ENCODE measurements at regions of chr7 and their contacts with region 1.

Region 1: GRCh38 chr7:73451780-73452398 is 18.3 kb downstream of the FZD9 start:
- DNase-seq: peak in 11 of 35 experiments; percentile 11 to 80 (median 26)
- ATAC-seq: peak; percentile 69 to 85 (median 80)
- H3K4me3 ChIP-seq: no peak overlapping the region
- H3K4me3 Mint-ChIP-seq: no peak overlapping the region
- H3K27ac ChIP-seq: no peak overlapping the region
- H3K27ac Mint-ChIP-seq: no peak overlapping the region
- H3K4me1 ChIP-seq: no peaks in the 10 kb centered on the region
- H3K4me1 Mint-ChIP-seq: peaks cover 12 to 14% (median 13%) of the 10 kb centered on the region in 3 donors
- H3K27me3 ChIP-seq: no peaks in the 10 kb centered on the region
- H3K27me3 Mint-ChIP-seq: no peaks in the 10 kb centered on the region

Region 2: DNA sequence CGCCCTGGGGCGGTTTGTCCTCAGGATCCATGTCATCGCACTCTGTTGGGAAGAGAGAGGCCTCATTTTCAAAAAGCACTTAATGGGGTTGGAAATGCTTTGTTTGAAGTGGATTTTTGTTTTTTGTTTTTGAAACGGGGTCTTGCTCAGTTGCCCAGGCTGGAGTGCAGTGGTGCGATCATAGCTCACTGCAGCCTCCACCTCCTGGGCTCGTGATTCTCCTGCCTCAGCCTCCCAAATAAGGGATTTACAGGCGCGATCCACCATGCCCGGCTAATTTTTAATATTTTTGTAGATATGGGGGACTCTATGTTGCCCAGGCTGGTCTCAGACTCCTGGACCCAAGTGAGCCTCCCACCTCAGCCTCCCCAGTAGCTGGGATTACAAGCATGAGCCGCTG is 123.2 kb before region 1 on chr7:
- CTCF ChIA-PET with region 1: interaction called in 1 of 2 experiments, 11 read pairs
- POLR2A ChIA-PET with region 1: no interaction called
- DNase-seq: no peak
- ATAC-seq: no peak
- H3K4me3 ChIP-seq: no peak overlapping the region
- H3K4me3 Mint-ChIP-seq: no peak overlapping the region
- H3K27ac ChIP-seq: no peak overlapping the region
- H3K27ac Mint-ChIP-seq: no peak overlapping the region
- H3K4me1 ChIP-seq: peaks cover 0 to 10% of the 10 kb centered on the region in 2 experiments
- H3K4me1 Mint-ChIP-seq: peaks cover 7 to 8% (median 7%) of the 10 kb centered on the region in 3 donors
- H3K27me3 ChIP-seq: peaks cover 0 to 5% of the 10 kb centered on the region in 2 experiments
- H3K27me3 Mint-ChIP-seq: peaks cover 0 to 3% of the 10 kb centered on the region in 2 donors

Region 3: DNA sequence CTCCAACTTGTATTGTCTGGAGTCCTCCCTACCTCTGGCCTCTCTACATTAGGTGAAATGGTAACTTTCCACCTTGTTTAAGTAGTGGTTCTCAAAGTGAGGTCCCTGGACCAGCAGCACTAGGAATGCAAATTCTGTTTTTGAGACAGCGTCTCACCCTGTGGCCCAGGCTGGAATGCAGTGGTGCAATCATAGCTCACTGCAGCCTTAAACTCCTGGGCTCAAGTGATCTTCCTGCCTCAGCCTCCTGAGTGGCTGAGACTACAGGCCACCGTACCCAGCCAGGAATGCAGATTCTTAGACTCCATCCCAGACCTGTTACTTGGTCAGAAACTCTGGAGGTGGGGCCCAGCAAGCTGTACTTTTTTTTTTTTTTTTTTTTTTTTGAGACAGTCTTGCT is 133.3 kb after region 1 on chr7:
- CTCF ChIA-PET with region 1: no interaction called
- POLR2A ChIA-PET with region 1: interaction called in 1 of 2 experiments, 10 read pairs
- DNase-seq: no peak
- ATAC-seq: no peak
- H3K4me3 ChIP-seq: no peak overlapping the region
- H3K4me3 Mint-ChIP-seq: no peak overlapping the region
- H3K27ac ChIP-seq: no peak overlapping the region
- H3K27ac Mint-ChIP-seq: no peak overlapping the region
- H3K4me1 ChIP-seq: peaks cover 0 to 3% of the 10 kb centered on the region in 2 experiments
- H3K4me1 Mint-ChIP-seq: peaks cover 4 to 10% (median 9%) of the 10 kb centered on the region in 3 donors
- H3K27me3 ChIP-seq: no peaks in the 10 kb centered on the region
- H3K27me3 Mint-ChIP-seq: no peaks in the 10 kb centered on the region

Region 4: GRCh38 chr7:74554178-74554577 is 1102.3 kb after region 1 on chr7:
- CTCF ChIA-PET with region 1: no interaction called
- POLR2A ChIA-PET with region 1: no interaction called
- DNase-seq: no peak
- ATAC-seq: no peak
- H3K4me3 ChIP-seq: no peak overlapping the region
- H3K4me3 Mint-ChIP-seq: no peak overlapping the region
- H3K27ac ChIP-seq: no peak overlapping the region
- H3K27ac Mint-ChIP-seq: no peak overlapping the region
- H3K4me1 ChIP-seq: no peaks in the 10 kb centered on the region
- H3K4me1 Mint-ChIP-seq: no peaks in the 10 kb centered on the region
- H3K27me3 ChIP-seq: no peaks in the 10 kb centered on the region
- H3K27me3 Mint-ChIP-seq: no peaks in the 10 kb centered on the region